ENCODE measurements at regions of chr15 and their contacts with region 1.

Region 1: GRCh38 chr15:50424066-50424890 is at the start of gene USP8:
- DNase-seq: peak; percentile 87 to 93
- ATAC-seq: peak; percentile 98
- H3K4me3 ChIP-seq: peak within 1 kb of the TSS; percentile 83 to 94 (median 84)
- H3K27ac ChIP-seq: peak within 1 kb of the TSS; percentile 89 to 93 (median 90)
- H3K4me1 ChIP-seq: peaks cover 20 to 26% of the 10 kb centered on the region in 2 donors
- H3K27me3 ChIP-seq: no peaks in the 10 kb centered on the region
- CTCF ChIP-seq: no peak
- POLR2A ChIP-seq: peak; percentile 81 to 83
- total RNA-seq, gene USP8: 30.8 to 49.3 (median 46.8) TPM

Region 2: GRCh38 chr15:50354838-50355618 is 69.2 kb before region 1 on chr15 and contains the start of gene GABPB1:
- in situ Hi-C with region 1: loop called in 1 of 4 experiments (anchors 10 kb)
- intact Hi-C with region 1: loop called (anchors 1 kb)
- DNase-seq: peak; percentile 79 to 80
- ATAC-seq: peak; percentile 87 to 90
- H3K4me3 ChIP-seq: peak within 1 kb of the TSS; percentile 79 to 94 (median 81)
- H3K27ac ChIP-seq: peak within 1 kb of the TSS; percentile 93 to 97 (median 94)
- H3K4me1 ChIP-seq: peaks cover 44 to 46% of the 10 kb centered on the region in 2 donors
- H3K27me3 ChIP-seq: no peaks in the 10 kb centered on the region
- CTCF ChIP-seq: no peak
- POLR2A ChIP-seq: peak; percentile 53 to 64
- total RNA-seq, gene GABPB1: 7.4 to 11.5 (median 8.7) TPM

Region 3: GRCh38 chr15:50377867-50378751 is 46.2 kb before region 1 on chr15:
- in situ Hi-C with region 1: no loop called
- intact Hi-C with region 1: no loop called
- DNase-seq: no peak
- ATAC-seq: no peak
- H3K4me3 ChIP-seq: no peak overlapping the region
- H3K27ac ChIP-seq: no peak overlapping the region
- H3K4me1 ChIP-seq: no peaks in the 10 kb centered on the region
- H3K27me3 ChIP-seq: no peaks in the 10 kb centered on the region
- CTCF ChIP-seq: no peak
- POLR2A ChIP-seq: no peak

Region 4: GRCh38 chr15:50506121-50506520 is 81.8 kb after region 1 on chr15:
- in situ Hi-C with region 1: loop called in 1 of 4 experiments (anchors 25 kb)
- intact Hi-C with region 1: no loop called
- DNase-seq: no peak
- ATAC-seq: no peak
- H3K4me3 ChIP-seq: no peak overlapping the region
- H3K27ac ChIP-seq: no peak overlapping the region
- H3K4me1 ChIP-seq: no peaks in the 10 kb centered on the region
- H3K27me3 ChIP-seq: no peaks in the 10 kb centered on the region
- CTCF ChIP-seq: no peak
- POLR2A ChIP-seq: no peak

Measured in gastrocnemius medialis (tissue), 4 donors.